ENCODE measurements at regions of chr9 and their contacts with region 1.

Region 1: GRCh38 chr9:33320568-33321261 is 30.4 kb downstream of the NFX1 start:
- DNase-seq: peak; percentile 73
- H3K4me3 ChIP-seq: no peak overlapping the region
- H3K27ac ChIP-seq: peak overlapping the region; percentile 83
- H3K4me1 ChIP-seq: peaks cover 5% of the 10 kb centered on the region
- H3K27me3 ChIP-seq: no peaks in the 10 kb centered on the region
- CTCF ChIP-seq: no peak

Region 2: GRCh38 chr9:33186457-33187168 is 134.1 kb before region 1 on chr9:
- CTCF ChIA-PET with region 1: no interaction called
- POLR2A ChIA-PET with region 1: interaction called, 11 read pairs
- intact Hi-C with region 1: no loop called
- DNase-seq: no peak
- H3K4me3 ChIP-seq: no peak overlapping the region
- H3K27ac ChIP-seq: no peak overlapping the region
- H3K4me1 ChIP-seq: no peaks in the 10 kb centered on the region
- H3K27me3 ChIP-seq: no peaks in the 10 kb centered on the region
- CTCF ChIP-seq: no peak

Region 3: GRCh38 chr9:33239921-33240320 is 80.8 kb before region 1 on chr9 and contains the start of gene SPINK4:
- CTCF ChIA-PET with region 1: no interaction called
- POLR2A ChIA-PET with region 1: no interaction called
- intact Hi-C with region 1: no loop called
- DNase-seq: no peak
- H3K4me3 ChIP-seq: no peak within 1 kb of the TSS
- H3K27ac ChIP-seq: no peak within 1 kb of the TSS
- H3K4me1 ChIP-seq: no peaks in the 10 kb centered on the region
- H3K27me3 ChIP-seq: no peaks in the 10 kb centered on the region
- CTCF ChIP-seq: no peak
- total RNA-seq, gene SPINK4: not detected in 2 replicates